ENCODE measurements at regions of chr1 and their contacts with region 1.

Region 1: GRCh38 chr1:76219366-76219818 is 144.8 kb downstream of the ST6GALNAC3 start:
- DNase-seq: no peak
- ATAC-seq: peak; percentile 68
- H3K4me3 ChIP-seq: no peak overlapping the region
- H3K27ac ChIP-seq: no peak overlapping the region
- H3K4me1 ChIP-seq: no peaks in the 10 kb centered on the region
- H3K27me3 ChIP-seq: no peaks in the 10 kb centered on the region
- CTCF ChIP-seq: no peak
- EP300 ChIP-seq: no peak
- POLR2A ChIP-seq: no peak
- RAD21 ChIP-seq: no peak

Region 2: DNA sequence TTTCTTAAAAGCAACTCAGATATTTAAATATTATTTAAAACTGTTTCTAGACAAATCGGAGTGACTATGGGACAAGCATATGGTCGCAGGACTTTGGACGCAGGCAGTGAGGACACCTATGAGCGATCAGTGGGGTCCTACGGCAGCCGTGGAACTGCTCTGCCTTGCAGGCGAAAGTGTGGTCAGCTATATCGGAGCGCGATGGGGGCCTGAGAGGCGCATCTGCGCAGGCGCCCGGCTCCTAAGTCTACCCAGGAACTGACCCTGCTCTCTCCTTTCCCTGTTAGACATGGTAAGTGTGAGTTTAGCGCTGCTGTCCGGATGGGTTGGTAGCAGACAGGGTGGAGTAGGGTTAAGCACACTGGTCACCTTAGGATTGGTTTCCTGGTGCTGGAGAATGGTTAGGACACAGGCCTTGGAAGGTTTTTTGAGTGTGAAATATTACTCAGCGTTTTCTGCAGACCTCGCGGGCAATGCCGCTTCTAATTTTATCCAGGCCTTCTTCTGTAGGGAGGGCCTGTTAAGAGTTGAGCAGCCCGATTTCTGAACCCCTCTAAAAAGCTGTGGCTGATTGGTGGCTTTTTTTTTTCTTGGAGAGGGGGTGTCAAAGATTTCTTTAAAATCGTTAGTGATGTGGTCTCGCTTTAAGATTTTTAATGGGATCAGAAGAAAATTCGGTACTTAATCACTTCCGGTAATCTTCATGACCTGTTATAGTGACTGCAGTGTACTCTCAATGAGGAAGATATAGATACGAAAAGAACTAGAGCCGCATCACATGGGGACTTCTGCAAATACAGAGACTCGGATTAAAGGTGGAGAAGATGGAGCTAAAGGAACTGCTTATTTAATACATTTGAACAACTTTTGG is 433.2 kb before region 1 on chr1 and contains the start of gene RABGGTB:
- CTCF ChIA-PET with region 1: no interaction called
- POLR2A ChIA-PET with region 1: no interaction called
- RAD21 ChIA-PET with region 1: no interaction called
- SMC1A ChIA-PET with region 1: no interaction called
- in situ Hi-C with region 1: no loop called
- intact Hi-C with region 1: no loop called
- DNase-seq: peak; percentile 92
- ATAC-seq: peak; percentile 80
- H3K4me3 ChIP-seq: peak within 1 kb of the TSS; percentile 80
- H3K27ac ChIP-seq: peak within 1 kb of the TSS; percentile 98
- H3K4me1 ChIP-seq: peaks cover 2% of the 10 kb centered on the region; the same call in 1 of the 2 replicates
- H3K27me3 ChIP-seq: no peaks in the 10 kb centered on the region
- CTCF ChIP-seq: no peak
- EP300 ChIP-seq: no peak
- POLR2A ChIP-seq: peak; percentile 100
- RAD21 ChIP-seq: no peak
- polyA plus RNA-seq, gene RABGGTB: 135 to 153 TPM

Region 3: GRCh38 chr1:76038287-76039004 is 180.9 kb before region 1 on chr1:
- CTCF ChIA-PET with region 1: no interaction called
- POLR2A ChIA-PET with region 1: no interaction called
- RAD21 ChIA-PET with region 1: no interaction called
- SMC1A ChIA-PET with region 1: no interaction called
- in situ Hi-C with region 1: no loop called
- intact Hi-C with region 1: no loop called
- DNase-seq: no peak
- ATAC-seq: no peak
- H3K4me3 ChIP-seq: no peak overlapping the region
- H3K27ac ChIP-seq: no peak overlapping the region
- H3K4me1 ChIP-seq: no peaks in the 10 kb centered on the region
- H3K27me3 ChIP-seq: no peaks in the 10 kb centered on the region; a peak in 1 of 4 replicates
- CTCF ChIP-seq: no peak
- EP300 ChIP-seq: no peak
- POLR2A ChIP-seq: no peak
- RAD21 ChIP-seq: no peak

Region 4: GRCh38 chr1:76229279-76230005 is 10.1 kb after region 1 on chr1:
- CTCF ChIA-PET with region 1: no interaction called
- POLR2A ChIA-PET with region 1: no interaction called
- RAD21 ChIA-PET with region 1: no interaction called
- SMC1A ChIA-PET with region 1: interaction called, 10 read pairs
- in situ Hi-C with region 1: no loop called
- intact Hi-C with region 1: no loop called
- DNase-seq: no peak
- ATAC-seq: no peak
- H3K4me3 ChIP-seq: no peak overlapping the region
- H3K27ac ChIP-seq: no peak overlapping the region
- H3K4me1 ChIP-seq: no peaks in the 10 kb centered on the region
- H3K27me3 ChIP-seq: no peaks in the 10 kb centered on the region
- CTCF ChIP-seq: no peak
- EP300 ChIP-seq: no peak
- POLR2A ChIP-seq: no peak
- RAD21 ChIP-seq: no peak

Measured in GM12878 (cell line).